Gastrocnemius medialis (tissue), 4 donors: ENCODE measurements at regions of chr6 and their contacts with region 1.

Region 1: GRCh38 chr6:3825851-3826581 is 23.2 kb upstream of the FAM50B start:
- DNase-seq: peak; percentile 74 to 84
- ATAC-seq: peak; percentile 84 to 92
- H3K4me3 ChIP-seq: peak overlapping the region; percentile 33 to 42 (median 39)
- H3K27ac ChIP-seq: peak overlapping the region; percentile 86 to 92 (median 90)
- H3K4me1 ChIP-seq: peaks cover 23 to 25% of the 10 kb centered on the region in 2 donors
- H3K27me3 ChIP-seq: no peaks in the 10 kb centered on the region
- CTCF ChIP-seq: no peak
- POLR2A ChIP-seq: peak in 1 of 2 donors; percentile 56

Region 2: DNA sequence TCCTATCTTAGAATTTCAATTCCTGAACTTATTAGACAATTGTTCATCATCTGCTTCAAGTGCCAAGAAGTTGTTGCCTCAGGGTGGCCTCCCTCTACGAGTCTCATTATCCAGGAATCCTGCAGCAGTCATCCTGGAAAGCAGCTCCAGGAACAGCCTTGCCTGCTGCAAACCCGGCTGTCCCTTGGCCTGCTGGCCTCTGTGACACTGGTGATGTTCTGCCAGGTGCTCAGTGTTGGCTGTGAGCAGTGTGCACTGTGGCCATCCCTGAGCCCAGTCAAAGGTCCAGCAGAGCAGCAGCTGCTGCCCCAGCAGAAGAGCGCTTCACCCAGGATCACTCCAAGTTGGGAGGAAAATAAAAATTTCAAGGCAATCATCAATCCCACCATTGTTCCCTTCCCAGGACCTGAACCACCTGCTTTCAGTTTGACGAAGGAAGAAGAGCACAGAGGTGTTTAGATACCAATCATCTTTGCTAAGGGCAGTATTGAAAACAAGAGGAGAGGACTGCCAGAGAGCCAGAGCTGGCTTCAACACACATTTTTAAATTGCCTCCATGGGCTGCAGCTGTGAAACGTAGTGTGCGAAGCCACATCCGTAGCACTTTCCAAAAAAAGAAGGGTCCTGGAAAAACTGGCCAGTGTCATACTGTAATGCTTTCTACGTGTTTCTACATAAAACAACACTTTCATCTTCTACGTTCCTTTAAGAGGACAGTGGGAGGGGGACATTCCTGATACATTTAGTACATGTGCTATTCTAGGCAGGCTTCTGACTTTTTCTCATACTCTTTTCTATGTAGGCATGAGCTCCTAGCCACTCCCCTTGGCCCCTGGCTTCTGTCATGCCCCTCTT is 15.9 kb after region 1 on chr6:
- in situ Hi-C with region 1: no loop called
- intact Hi-C with region 1: loop called (anchors 1 kb)
- DNase-seq: peak; percentile 78 to 85
- ATAC-seq: peak; percentile 93 to 95
- H3K4me3 ChIP-seq: no peak overlapping the region
- H3K27ac ChIP-seq: peak overlapping the region; percentile 33 to 77 (median 63)
- H3K4me1 ChIP-seq: peaks cover 16 to 20% of the 10 kb centered on the region in 2 donors
- H3K27me3 ChIP-seq: no peaks in the 10 kb centered on the region
- CTCF ChIP-seq: no peak
- POLR2A ChIP-seq: peak; percentile 41 to 58

Region 3: GRCh38 chr6:3905945-3906845 is 80.2 kb after region 1 on chr6:
- in situ Hi-C with region 1: no loop called
- intact Hi-C with region 1: loop called (anchors 5 kb)
- DNase-seq: peak; percentile 92 to 94
- ATAC-seq: peak; percentile 92 to 95
- H3K4me3 ChIP-seq: peak overlapping the region; percentile 27 to 39 (median 34)
- H3K27ac ChIP-seq: peak overlapping the region; percentile 85 to 92 (median 90)
- H3K4me1 ChIP-seq: peaks cover 60 to 66% of the 10 kb centered on the region in 2 donors
- H3K27me3 ChIP-seq: no peaks in the 10 kb centered on the region
- CTCF ChIP-seq: no peak
- POLR2A ChIP-seq: peak; percentile 25 to 34